ENCODE measurements at regions of chr6 and their contacts with region 1.

Region 1: DNA sequence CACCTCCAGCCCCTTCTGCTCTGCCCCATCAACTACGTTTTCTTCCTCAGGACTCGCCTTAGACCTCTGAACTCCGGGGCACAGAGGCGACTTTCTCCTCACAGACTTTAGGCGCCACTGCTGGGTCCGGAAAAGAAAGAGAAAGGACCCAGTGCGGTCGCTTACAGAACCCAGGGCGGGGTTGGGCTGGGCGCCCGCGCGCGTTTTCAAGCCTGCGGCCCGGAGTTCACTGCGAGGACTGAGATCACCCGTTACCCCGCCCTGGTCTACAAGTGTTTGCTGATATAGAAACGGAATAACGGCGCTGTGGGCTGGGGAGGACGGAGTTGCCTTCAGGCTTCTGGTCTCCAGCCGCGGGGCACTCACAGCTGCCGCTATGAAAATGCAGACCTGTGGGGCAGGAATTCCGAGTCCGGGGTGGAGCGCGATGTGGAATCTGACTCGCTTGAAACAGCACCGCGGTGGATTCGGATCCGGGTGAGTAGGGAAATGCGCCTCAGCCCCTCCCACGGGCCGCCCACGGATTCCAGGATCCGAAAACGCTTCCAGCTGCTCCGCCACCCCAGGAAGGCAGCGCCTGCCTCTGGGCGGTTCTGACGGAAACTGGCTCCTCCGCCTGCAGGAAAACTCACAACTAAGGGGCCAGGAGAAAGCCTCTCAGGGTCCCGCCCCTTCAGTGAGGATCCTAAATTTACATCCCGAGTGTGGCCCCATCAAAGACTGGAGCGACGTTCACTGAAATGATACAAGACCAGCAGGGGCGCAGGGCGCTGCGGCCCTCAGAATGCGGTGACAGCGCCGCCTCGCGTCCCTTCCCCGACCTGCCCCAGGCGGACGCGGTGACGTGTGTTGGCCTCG is 29.4 kb downstream of the HLA-F start:
- DNase-seq: peak; percentile 50
- H3K4me3 ChIP-seq: peak overlapping the region; percentile 67
- H3K27ac ChIP-seq: peak overlapping the region; percentile 31
- H3K27me3 ChIP-seq: peaks cover 37% of the 10 kb centered on the region
- CTCF ChIP-seq: peak; percentile 95

Region 2: DNA sequence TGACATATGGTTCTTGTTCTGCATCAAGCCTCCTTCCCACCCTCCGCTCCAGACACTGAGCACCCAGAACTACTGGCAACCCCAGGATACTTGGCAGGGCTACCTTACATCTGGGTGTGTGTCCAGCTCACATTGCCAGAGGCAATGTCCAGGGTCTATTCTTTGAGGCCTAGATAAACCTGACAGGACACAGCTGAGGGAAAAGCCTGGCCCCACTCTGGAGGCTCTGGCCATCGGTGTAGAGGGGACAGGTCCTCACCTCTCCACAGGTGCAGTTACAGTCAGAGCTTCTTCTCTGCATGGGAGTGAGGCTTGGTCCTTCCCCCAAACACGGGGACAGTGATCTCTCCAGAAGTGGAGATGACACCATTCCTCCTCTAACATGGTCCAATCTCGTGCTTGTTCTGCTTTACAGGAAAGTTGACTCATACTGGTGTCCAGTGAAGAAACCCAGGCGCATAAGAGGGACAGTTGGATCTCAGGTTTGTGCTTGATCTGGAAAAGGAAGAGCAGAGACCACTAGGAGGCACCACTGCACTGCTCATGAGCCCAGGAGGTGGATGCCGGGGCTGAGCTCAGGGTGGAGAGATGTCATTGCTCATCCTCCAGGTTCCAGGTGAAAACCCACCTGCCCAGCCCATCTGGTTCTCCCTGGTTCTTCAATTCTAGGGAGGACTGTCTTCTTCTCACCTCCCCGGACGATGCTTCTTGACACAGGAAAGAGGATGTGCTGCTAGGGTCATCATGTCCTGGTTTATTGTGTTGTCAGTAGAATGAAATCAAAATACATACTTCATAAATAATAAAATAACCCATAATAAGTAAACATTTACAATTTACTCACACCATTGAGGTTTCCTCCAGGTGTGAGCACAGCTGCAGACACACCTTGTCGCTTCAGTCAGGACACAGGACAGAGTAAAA is 14.7 kb before region 1 on chr6:
- CTCF ChIA-PET with region 1: interaction called, 14 read pairs
- POLR2A ChIA-PET with region 1: no interaction called
- DNase-seq: peak; percentile 15
- H3K4me3 ChIP-seq: no peak overlapping the region
- H3K27ac ChIP-seq: no peak overlapping the region
- H3K27me3 ChIP-seq: peaks cover 2% of the 10 kb centered on the region
- CTCF ChIP-seq: peak; percentile 65

Region 3: DNA sequence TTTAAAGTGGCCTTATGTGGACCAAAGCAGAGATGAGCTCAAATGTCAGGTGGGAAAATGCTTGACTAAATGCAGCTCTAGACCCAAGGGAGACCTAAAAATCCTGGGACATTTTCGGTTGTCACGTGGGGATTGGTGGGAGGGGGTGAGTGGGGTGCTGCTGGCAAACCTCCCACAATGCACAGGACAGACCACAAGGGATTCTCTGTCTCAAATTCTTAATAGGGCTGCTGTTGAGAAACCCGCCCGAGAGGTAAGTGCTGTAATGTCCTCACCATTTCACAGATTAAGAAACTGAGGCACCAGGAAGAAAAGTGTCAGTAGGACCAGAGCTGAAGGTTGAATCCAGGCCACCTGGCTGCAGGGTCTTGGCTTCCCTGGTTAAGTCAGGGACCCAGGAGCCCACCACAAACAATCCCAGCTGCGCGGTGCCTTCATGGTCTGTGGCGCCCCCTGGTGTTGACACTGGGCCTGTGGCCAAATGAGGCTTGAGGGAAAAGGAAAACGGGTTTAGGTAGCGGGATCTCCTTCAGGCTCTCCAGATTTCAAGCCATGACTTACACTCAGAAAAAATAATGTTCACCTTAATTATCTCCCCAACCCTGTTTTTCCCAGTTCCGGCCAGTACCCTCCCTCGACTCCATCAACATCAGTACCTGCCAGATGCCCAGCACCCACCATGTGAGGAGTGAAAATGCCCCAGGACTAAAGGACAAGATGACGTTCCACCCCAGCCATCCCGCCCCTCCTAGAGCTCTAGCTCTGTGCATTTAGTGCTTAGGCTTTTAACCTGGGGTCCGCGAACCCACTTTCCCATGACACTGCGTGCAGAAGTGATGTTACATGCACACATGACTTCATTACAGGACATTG is 82.1 kb after region 1 on chr6:
- CTCF ChIA-PET with region 1: no interaction called
- POLR2A ChIA-PET with region 1: no interaction called
- DNase-seq: no peak
- H3K4me3 ChIP-seq: no peak overlapping the region
- H3K27ac ChIP-seq: no peak overlapping the region
- H3K27me3 ChIP-seq: peaks cover 7% of the 10 kb centered on the region
- CTCF ChIP-seq: peak; percentile 76

Region 4: DNA sequence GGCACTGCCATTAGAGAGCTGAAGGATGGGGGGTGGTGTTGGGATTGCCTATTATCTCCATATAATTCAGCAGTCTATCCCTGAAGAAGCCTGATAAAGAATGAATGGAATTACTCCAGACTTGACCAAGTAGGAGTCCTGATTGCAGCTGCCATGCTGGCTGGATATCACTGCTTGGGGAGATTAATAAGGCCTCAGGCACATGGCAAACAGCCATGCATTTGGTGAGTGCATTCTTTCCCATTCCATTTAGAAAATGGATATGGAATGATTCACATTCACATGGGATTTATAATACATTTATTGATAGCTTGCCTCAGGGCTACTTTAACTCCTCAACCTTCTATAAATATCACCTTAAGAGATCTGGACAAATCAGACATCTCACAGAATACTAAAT is 140.0 kb after region 1 on chr6:
- CTCF ChIA-PET with region 1: no interaction called
- POLR2A ChIA-PET with region 1: no interaction called
- DNase-seq: no peak
- H3K4me3 ChIP-seq: no peak overlapping the region
- H3K27ac ChIP-seq: no peak overlapping the region
- H3K27me3 ChIP-seq: peaks cover 2% of the 10 kb centered on the region
- CTCF ChIP-seq: no peak

Measured in AG04450 (cell line).